Activated CD4-positive, alpha-beta T cell treated with anti-CD3 and anti-CD28 coated beads for 36 hours (primary cell): ENCODE measurements at regions of chr14 and their contacts with region 1.

Region 1: GRCh38 chr14:71967704-71968103 is 35.5 kb downstream of the RGS6 start:
- DNase-seq: no peak
- ATAC-seq: peak; percentile 89
- H3K4me3 Mint-ChIP-seq: peak overlapping the region; percentile 38
- H3K27ac Mint-ChIP-seq: peak overlapping the region; percentile 78
- H3K4me1 Mint-ChIP-seq: peaks cover 14% of the 10 kb centered on the region
- H3K27me3 Mint-ChIP-seq: peaks cover 29% of the 10 kb centered on the region

Region 2: DNA sequence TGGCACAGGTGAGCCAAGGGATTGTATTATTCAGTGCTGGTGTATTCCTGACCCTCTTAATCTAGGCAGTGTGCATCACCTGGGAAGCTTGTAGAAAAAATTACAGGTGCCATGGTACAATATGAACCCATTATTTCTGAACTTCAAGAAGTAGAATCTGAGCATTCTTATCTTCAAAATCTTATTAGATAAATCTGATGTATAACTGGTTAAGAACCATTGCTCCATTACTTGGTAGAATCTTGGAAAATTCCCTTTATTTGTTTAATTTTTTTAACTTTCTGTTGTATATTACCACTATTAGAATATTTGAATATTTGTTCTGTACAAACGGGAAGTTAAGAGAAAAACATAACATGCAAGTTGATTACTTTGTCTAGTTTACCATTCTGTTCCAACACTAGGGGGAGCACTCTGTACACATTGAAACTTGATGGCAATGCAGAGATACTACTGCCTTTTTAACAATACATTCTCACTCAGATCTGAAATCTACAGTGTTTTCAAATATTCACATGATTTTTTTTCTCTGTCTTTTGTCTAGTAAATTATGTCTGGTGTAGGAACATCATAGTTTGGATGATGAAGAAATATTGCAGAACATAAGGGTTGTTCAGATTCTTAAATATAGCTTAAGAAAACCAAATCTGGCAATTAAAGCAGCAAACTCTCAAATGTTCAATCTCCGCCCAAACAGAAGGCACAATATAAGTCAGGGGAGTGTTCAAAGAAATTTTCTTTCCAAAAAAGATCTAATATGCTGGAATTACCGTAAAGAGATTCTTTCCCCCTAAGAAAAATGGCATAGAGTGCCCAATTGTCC is 863.8 kb before region 1 on chr14:
- CTCF ChIA-PET with region 1: no interaction called
- POLR2A ChIA-PET with region 1: no interaction called
- intact Hi-C with region 1: no loop called
- DNase-seq: no peak
- ATAC-seq: no peak
- H3K4me3 Mint-ChIP-seq: no peak overlapping the region
- H3K27ac Mint-ChIP-seq: no peak overlapping the region
- H3K4me1 Mint-ChIP-seq: peaks cover 4% of the 10 kb centered on the region
- H3K27me3 Mint-ChIP-seq: no peaks in the 10 kb centered on the region

Region 3: DNA sequence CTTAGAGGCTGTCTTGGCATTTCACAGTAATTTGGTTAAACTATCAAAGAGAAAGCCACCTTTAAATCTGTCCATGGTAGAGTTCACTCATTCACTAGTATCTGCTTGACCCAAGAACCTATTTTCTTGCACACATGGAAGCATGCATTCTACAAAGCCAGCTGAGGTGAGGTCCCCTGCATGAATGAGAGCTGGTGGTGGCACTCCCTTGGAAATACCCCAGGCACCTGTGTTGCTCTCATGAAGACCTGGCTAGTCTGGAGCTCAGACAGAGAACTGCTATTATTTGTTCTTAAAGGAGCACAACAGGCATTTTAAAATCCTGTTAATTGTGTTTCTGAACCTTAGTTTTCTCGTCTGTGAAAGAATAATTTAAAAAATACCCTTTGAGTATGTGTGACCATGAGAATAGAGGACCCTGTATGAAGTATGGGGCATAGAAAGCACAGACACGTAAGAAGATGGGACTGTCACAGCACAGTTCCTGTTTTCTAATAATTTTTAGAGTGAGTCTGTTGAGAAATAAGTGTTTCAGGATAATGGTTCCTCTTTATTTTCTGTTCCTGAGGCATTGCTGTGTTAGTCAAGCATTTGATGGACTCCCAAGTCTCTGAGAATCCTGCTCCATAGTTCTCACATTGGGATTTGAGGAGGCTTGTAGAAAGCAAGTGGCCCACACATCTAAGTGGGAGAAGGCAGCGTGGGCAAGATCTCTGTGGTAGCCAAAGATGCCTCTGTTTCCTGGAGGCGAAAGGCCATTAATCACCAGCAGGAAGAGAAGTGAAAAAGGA is 24.6 kb before region 1 on chr14:
- CTCF ChIA-PET with region 1: no interaction called
- POLR2A ChIA-PET with region 1: no interaction called
- intact Hi-C with region 1: no loop called
- DNase-seq: no peak
- ATAC-seq: no peak
- H3K4me3 Mint-ChIP-seq: no peak overlapping the region
- H3K27ac Mint-ChIP-seq: no peak overlapping the region
- H3K4me1 Mint-ChIP-seq: no peaks in the 10 kb centered on the region
- H3K27me3 Mint-ChIP-seq: peaks cover 20% of the 10 kb centered on the region

Region 4: GRCh38 chr14:72049455-72049854 is 81.8 kb after region 1 on chr14:
- CTCF ChIA-PET with region 1: no interaction called
- POLR2A ChIA-PET with region 1: no interaction called
- intact Hi-C with region 1: loop called in 1 of 2 experiments (anchors 1 kb)
- DNase-seq: peak; percentile 69
- ATAC-seq: peak; percentile 100
- H3K4me3 Mint-ChIP-seq: no peak overlapping the region
- H3K27ac Mint-ChIP-seq: peak overlapping the region; percentile 19
- H3K4me1 Mint-ChIP-seq: peaks cover 12% of the 10 kb centered on the region
- H3K27me3 Mint-ChIP-seq: peaks cover 26% of the 10 kb centered on the region